ENCODE measurements at regions of chr12 and their contacts with region 1.

Region 1: GRCh38 chr12:29519585-29520182 is 22.2 kb upstream of the OVCH1 start:
- DNase-seq: peak; percentile 28
- ATAC-seq: no peak
- H3K4me3 ChIP-seq: no peak overlapping the region
- H3K27ac ChIP-seq: no peak overlapping the region
- H3K4me1 ChIP-seq: no peaks in the 10 kb centered on the region
- H3K27me3 ChIP-seq: no peaks in the 10 kb centered on the region
- CTCF ChIP-seq: peak; percentile 47
- EP300 ChIP-seq: no peak
- POLR2A ChIP-seq: no peak
- RAD21 ChIP-seq: no peak

Region 2: GRCh38 chr12:29309320-29309902 is 210.3 kb before region 1 on chr12:
- CTCF ChIA-PET with region 1: no interaction called
- POLR2A ChIA-PET with region 1: no interaction called
- in situ Hi-C with region 1: no loop called
- intact Hi-C with region 1: loop called (anchors 5 kb)
- DNase-seq: no peak
- ATAC-seq: no peak
- H3K4me3 ChIP-seq: no peak overlapping the region
- H3K27ac ChIP-seq: no peak overlapping the region
- H3K4me1 ChIP-seq: no peaks in the 10 kb centered on the region
- H3K27me3 ChIP-seq: no peaks in the 10 kb centered on the region
- CTCF ChIP-seq: peak; percentile 34; the same call in 1 of the 2 replicates
- EP300 ChIP-seq: no peak
- POLR2A ChIP-seq: no peak
- RAD21 ChIP-seq: no peak

Region 3: GRCh38 chr12:29591140-29592020 is 71.7 kb after region 1 on chr12:
- CTCF ChIA-PET with region 1: no interaction called
- POLR2A ChIA-PET with region 1: no interaction called
- in situ Hi-C with region 1: no loop called
- intact Hi-C with region 1: no loop called
- DNase-seq: no peak
- ATAC-seq: no peak; the same call in 2 of the 3 replicates
- H3K4me3 ChIP-seq: no peak overlapping the region
- H3K27ac ChIP-seq: no peak overlapping the region
- H3K4me1 ChIP-seq: no peaks in the 10 kb centered on the region
- H3K27me3 ChIP-seq: no peaks in the 10 kb centered on the region
- CTCF ChIP-seq: no peak
- EP300 ChIP-seq: no peak
- POLR2A ChIP-seq: no peak
- RAD21 ChIP-seq: no peak

Region 4: DNA sequence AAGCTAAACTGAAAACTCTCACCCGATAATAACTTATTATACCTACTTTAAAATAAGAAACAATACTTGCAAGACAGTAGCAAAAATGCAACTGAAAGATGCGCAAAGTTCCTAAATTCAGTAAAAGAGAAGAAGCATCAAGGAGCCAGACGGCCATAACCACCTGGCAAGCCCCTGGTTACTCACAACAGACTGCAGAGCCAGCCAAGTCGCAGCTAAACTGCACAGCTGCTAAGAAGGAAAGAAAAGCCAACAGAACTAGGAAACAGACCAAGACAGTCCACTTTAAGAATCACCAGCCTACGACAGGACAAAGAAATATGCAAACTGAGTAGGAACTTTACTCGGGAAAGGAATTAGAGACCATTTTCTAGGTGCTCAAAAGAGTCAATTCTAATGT is 136.2 kb after region 1 on chr12:
- CTCF ChIA-PET with region 1: no interaction called
- POLR2A ChIA-PET with region 1: no interaction called
- in situ Hi-C with region 1: no loop called
- intact Hi-C with region 1: no loop called
- DNase-seq: no peak
- ATAC-seq: no peak
- H3K4me3 ChIP-seq: no peak overlapping the region
- H3K27ac ChIP-seq: no peak overlapping the region
- H3K4me1 ChIP-seq: no peaks in the 10 kb centered on the region
- H3K27me3 ChIP-seq: no peaks in the 10 kb centered on the region
- CTCF ChIP-seq: no peak
- EP300 ChIP-seq: no peak
- POLR2A ChIP-seq: no peak
- RAD21 ChIP-seq: no peak

Region 5: GRCh38 chr12:30134229-30134628 is 614.5 kb after region 1 on chr12:
- CTCF ChIA-PET with region 1: interaction called, 12 read pairs
- POLR2A ChIA-PET with region 1: no interaction called
- in situ Hi-C with region 1: no loop called
- intact Hi-C with region 1: loop called (anchors 5 kb)
- DNase-seq: peak; percentile 24
- ATAC-seq: peak; percentile 89
- H3K4me3 ChIP-seq: no peak overlapping the region
- H3K27ac ChIP-seq: no peak overlapping the region
- H3K4me1 ChIP-seq: no peaks in the 10 kb centered on the region
- H3K27me3 ChIP-seq: no peaks in the 10 kb centered on the region
- CTCF ChIP-seq: peak; percentile 59
- EP300 ChIP-seq: no peak
- POLR2A ChIP-seq: no peak
- RAD21 ChIP-seq: no peak

Region 6: GRCh38 chr12:30286345-30286926 is 766.8 kb after region 1 on chr12:
- CTCF ChIA-PET with region 1: no interaction called
- POLR2A ChIA-PET with region 1: no interaction called
- in situ Hi-C with region 1: no loop called
- intact Hi-C with region 1: loop called (anchors 10 kb)
- DNase-seq: peak; percentile 6
- ATAC-seq: no peak
- H3K4me3 ChIP-seq: no peak overlapping the region
- H3K27ac ChIP-seq: no peak overlapping the region
- H3K4me1 ChIP-seq: no peaks in the 10 kb centered on the region
- H3K27me3 ChIP-seq: no peaks in the 10 kb centered on the region
- CTCF ChIP-seq: 0 out of 2 replicates have a peak, but pooled peaks have one; percentile 28
- EP300 ChIP-seq: no peak
- POLR2A ChIP-seq: no peak
- RAD21 ChIP-seq: no peak

Region 7: GRCh38 chr12:30806989-30807694 is 1287.5 kb after region 1 on chr12:
- CTCF ChIA-PET with region 1: interaction called, 5 read pairs
- POLR2A ChIA-PET with region 1: no interaction called
- in situ Hi-C with region 1: no loop called
- intact Hi-C with region 1: loop called (anchors 2 kb)
- DNase-seq: peak; percentile 54
- ATAC-seq: peak; percentile 96
- H3K4me3 ChIP-seq: no peak overlapping the region
- H3K27ac ChIP-seq: no peak overlapping the region
- H3K4me1 ChIP-seq: peaks cover 14% of the 10 kb centered on the region
- H3K27me3 ChIP-seq: no peaks in the 10 kb centered on the region
- CTCF ChIP-seq: peak; percentile 88
- EP300 ChIP-seq: no peak
- POLR2A ChIP-seq: no peak
- RAD21 ChIP-seq: peak; percentile 83

Region 8: DNA sequence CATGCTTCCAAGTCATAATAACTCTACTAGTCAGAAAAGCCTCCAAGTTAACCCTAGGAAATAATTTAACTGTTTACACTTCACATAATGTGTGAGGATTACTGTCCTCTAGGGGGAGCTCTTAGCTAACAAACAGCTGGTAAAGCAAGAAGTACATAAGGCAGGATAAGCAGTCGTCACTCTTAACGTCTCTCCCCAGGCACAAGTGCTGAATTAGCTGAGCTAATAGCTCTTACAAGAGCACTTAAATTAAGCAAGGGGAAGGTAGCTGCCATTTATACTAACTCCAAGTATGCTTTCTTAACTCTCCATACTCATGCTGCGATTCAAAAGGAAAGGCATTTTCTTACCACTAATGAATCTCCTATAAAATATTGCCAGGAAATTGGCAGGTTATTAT is 1327.6 kb after region 1 on chr12:
- CTCF ChIA-PET with region 1: interaction called, 3 read pairs
- POLR2A ChIA-PET with region 1: no interaction called
- in situ Hi-C with region 1: no loop called
- intact Hi-C with region 1: loop called (anchors 1 kb)
- DNase-seq: peak; percentile 66
- ATAC-seq: peak; percentile 18; the same call in 1 of the 3 replicates
- H3K4me3 ChIP-seq: no peak overlapping the region
- H3K27ac ChIP-seq: no peak overlapping the region
- H3K4me1 ChIP-seq: no peaks in the 10 kb centered on the region
- H3K27me3 ChIP-seq: no peaks in the 10 kb centered on the region
- CTCF ChIP-seq: peak; percentile 74
- EP300 ChIP-seq: no peak
- POLR2A ChIP-seq: no peak
- RAD21 ChIP-seq: peak; percentile 83

Measured in HepG2 (cell line).